SK-N-SH (cell line): ENCODE measurements at regions of chr9 and their contacts with region 1.

Region 1: GRCh38 chr9:38026021-38026809 is 42.8 kb downstream of the SHB start:
- DNase-seq: peak; percentile 47
- H3K4me3 ChIP-seq: no peak overlapping the region
- H3K27ac ChIP-seq: peak overlapping the region; percentile 88 to 100
- H3K4me1 ChIP-seq: peaks cover 62 to 82% of the 10 kb centered on the region in 2 experiments
- H3K27me3 ChIP-seq: no peaks in the 10 kb centered on the region
- CTCF ChIP-seq: no peak
- EP300 ChIP-seq: peak in 1 of 2 experiments; percentile 67; a peak in 1 of 4 replicates
- RAD21 ChIP-seq: no peak; the same call in 1 of the 2 replicates

Region 2: GRCh38 chr9:37719526-37719925 is 306.7 kb before region 1 on chr9:
- CTCF ChIA-PET with region 1: no interaction called
- POLR2A ChIA-PET with region 1: no interaction called
- DNase-seq: no peak
- H3K4me3 ChIP-seq: no peak overlapping the region
- H3K27ac ChIP-seq: no peak overlapping the region
- H3K4me1 ChIP-seq: peaks cover 0 to 3% of the 10 kb centered on the region in 2 experiments; a peak in 1 of 4 replicates
- H3K27me3 ChIP-seq: no peaks in the 10 kb centered on the region; the same call in 1 of the 2 replicates
- CTCF ChIP-seq: no peak
- EP300 ChIP-seq: no peak
- RAD21 ChIP-seq: no peak

Region 3: GRCh38 chr9:37929441-37929895 is 96.7 kb before region 1 on chr9:
- CTCF ChIA-PET with region 1: no interaction called
- POLR2A ChIA-PET with region 1: no interaction called
- DNase-seq: no peak
- H3K4me3 ChIP-seq: no peak overlapping the region
- H3K27ac ChIP-seq: peak overlapping the region; percentile 68 to 88
- H3K4me1 ChIP-seq: peaks cover 15 to 65% of the 10 kb centered on the region in 2 experiments; a peak in 3 of 4 replicates
- H3K27me3 ChIP-seq: no peaks in the 10 kb centered on the region
- CTCF ChIP-seq: no peak
- EP300 ChIP-seq: 0 out of 4 replicates have a peak, but pooled peaks of 1 of the 2 experiments have one; percentile 33
- RAD21 ChIP-seq: no peak

Region 4: DNA sequence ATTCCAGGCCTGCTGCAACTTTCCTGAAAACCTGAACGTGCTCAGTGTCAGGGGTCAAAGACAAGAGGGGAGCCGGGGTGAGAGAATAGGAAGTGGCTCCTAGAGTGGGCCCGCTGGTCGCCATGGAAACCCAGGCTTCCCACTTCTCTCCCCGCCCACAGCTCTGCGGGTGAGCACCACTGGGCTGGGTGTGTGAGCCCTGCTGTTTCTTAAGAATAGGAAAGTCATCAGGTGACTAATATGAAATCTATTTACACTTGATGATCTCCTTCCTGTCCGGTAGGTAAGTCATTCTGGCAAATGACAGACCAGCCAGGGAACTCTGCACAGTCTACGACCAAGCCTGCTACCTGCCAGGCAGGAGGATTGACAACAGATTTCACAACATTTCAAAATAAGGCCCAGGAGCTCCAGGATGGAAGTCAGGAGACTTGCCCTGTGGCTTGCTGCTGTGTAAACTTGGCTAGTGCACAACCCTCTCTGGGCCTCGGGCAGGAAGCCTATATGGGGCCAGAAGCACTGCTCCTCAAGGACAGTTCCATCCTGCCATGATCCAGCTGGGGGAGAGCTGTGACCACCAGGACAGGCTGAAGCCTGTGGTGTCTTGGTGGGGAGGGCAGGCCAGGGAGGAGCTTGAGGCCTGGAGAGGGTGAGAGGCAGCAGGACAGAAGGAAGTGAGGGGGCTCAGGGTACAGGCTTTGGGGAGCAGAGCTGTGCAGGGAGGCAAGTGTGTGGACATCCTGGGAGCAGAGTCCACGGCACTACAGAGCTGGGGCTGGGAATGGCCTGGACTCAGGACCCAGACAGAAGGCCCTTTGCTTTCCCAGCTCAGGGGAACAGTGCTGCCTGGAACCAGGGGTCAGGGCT is 17.8 kb before region 1 on chr9:
- CTCF ChIA-PET with region 1: no interaction called
- POLR2A ChIA-PET with region 1: no interaction called
- DNase-seq: no peak
- H3K4me3 ChIP-seq: no peak overlapping the region; a peak in 1 of 4 replicates
- H3K27ac ChIP-seq: peak overlapping the region; percentile 11 to 93; a peak in 3 of 4 replicates
- H3K4me1 ChIP-seq: peaks cover 27 to 39% of the 10 kb centered on the region in 2 experiments; a peak in 3 of 4 replicates
- H3K27me3 ChIP-seq: no peaks in the 10 kb centered on the region
- CTCF ChIP-seq: no peak
- EP300 ChIP-seq: peak in 1 of 2 experiments; percentile 69; a peak in 1 of 4 replicates
- RAD21 ChIP-seq: no peak

Region 5: DNA sequence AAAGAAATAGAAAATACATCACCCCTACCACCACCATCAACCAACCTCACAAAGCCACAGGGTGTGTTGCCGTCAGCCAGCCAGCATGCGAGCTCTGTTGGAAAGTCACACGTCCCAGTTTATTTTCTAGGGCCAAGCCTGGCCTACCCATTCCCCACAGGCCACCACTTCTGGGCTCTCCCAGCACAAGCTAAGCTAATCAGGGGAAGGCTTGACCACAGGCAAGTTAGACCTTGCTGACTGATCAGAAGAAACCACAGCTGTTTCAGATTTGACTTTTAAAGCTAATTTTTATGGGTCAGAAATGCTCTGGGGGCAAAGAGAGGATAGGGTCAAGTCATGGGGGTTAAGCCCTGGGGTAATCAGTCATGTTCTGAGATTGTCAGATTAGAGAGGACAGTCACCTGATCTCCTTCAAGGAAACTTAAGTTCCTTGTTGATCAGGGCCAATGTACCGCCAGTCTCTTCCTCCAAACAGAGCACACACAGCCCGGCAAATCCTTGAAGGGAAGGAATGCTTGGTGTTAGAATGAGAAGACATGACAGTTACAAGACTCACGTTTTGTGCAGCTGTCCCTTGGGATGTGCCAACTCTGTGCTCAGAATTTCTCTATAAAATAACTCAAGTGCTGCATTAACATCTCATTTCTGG is 35.2 kb after region 1 on chr9:
- CTCF ChIA-PET with region 1: interaction called, 18 read pairs
- POLR2A ChIA-PET with region 1: interaction called, 7 read pairs
- DNase-seq: no peak
- H3K4me3 ChIP-seq: no peak overlapping the region
- H3K27ac ChIP-seq: peak overlapping the region; percentile 9 to 67; a peak in 2 of 4 replicates
- H3K4me1 ChIP-seq: peaks cover 64 to 68% of the 10 kb centered on the region in 2 experiments; a peak in 3 of 4 replicates
- H3K27me3 ChIP-seq: no peaks in the 10 kb centered on the region
- CTCF ChIP-seq: no peak
- EP300 ChIP-seq: no peak
- RAD21 ChIP-seq: no peak

Region 6: DNA sequence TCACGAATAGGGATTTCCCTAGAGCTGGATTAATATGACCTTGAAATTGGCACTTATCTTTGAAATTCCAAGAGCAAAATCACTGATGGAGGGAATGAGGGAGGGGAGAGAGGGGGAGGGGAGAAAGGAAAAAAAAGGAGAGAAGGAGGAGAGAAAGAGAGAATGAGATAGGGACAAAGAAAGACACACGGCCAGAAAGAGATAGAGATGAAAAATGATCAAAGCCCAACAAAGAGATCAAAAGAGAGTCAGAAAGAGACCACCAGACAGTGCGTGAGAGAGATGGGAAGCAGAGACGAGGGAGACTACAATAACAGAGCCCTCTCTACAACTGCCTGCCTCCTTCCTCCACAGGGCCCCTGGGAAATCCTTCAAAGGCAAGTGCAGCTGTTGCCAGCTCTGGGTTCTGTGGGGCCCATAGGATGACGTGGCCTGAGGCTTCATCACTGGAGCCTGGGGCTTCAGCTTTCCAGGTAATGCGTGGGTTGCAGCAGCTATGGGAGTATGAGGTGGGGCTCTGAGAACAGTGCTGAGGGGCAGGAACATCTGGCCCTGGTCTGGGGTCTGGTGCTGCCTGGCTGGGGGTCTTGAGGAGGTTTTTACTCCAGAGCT is 101.2 kb after region 1 on chr9:
- CTCF ChIA-PET with region 1: no interaction called
- POLR2A ChIA-PET with region 1: no interaction called
- DNase-seq: no peak
- H3K4me3 ChIP-seq: no peak overlapping the region
- H3K27ac ChIP-seq: no peak overlapping the region
- H3K4me1 ChIP-seq: no peaks in the 10 kb centered on the region; a peak in 1 of 4 replicates
- H3K27me3 ChIP-seq: peaks cover 31% of the 10 kb centered on the region; the same call in 1 of the 2 replicates
- CTCF ChIP-seq: no peak
- EP300 ChIP-seq: no peak
- RAD21 ChIP-seq: no peak